Gastrocnemius medialis (tissue), 4 donors: ENCODE measurements at regions of chr4 and their contacts with region 1.

Region 1: DNA sequence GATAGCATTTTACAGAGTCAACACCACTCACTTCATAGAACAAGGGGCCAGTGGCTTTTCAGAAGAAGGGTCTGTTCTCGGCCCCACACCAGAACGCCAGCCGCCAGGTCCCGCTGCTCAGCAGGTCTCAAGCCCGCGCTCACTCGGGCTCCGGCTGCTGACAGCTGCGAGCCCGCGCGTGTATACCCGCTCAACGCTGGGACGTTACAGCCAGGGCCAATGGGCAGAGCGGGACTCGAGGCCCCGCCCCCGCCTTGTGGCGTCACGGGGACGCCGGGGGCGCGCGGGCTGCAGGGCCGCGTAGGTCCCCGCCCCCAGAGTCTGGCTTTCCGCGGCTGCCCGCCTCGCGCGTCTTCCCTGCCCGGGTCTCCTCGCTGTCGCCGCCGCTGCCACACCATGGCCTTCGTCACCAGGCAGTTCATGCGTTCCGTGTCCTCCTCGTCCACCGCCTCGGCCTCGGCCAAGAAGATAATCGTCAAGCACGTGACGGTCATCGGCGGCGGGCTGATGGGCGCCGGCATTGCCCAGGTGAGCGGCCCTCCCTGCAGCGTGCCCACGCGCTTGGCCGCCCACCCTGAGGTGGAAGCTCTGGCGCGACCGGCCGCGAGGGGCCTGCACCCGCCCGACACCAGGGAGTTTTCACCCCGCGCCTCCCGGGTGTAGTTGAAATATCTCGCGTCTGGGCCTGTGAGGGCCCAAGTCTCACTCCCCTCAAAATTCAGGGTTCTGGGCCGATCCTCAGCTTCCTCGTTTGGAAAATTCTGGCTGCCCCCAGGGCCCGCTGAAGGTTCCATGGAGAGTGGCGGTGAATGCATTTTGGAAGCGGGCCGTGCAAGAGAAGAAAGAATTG is at the start of gene HADH:
- DNase-seq: peak; percentile 92 to 96
- ATAC-seq: peak; percentile 86 to 87
- H3K4me3 ChIP-seq: peak within 1 kb of the TSS; percentile 76 to 91 (median 90)
- H3K27ac ChIP-seq: peak within 1 kb of the TSS; percentile 92 to 99 (median 96)
- H3K4me1 ChIP-seq: peaks cover 38 to 47% of the 10 kb centered on the region in 2 donors
- H3K27me3 ChIP-seq: no peaks in the 10 kb centered on the region
- CTCF ChIP-seq: no peak
- POLR2A ChIP-seq: peak; percentile 99
- total RNA-seq, gene HADH: 78.0 to 137 (median 105) TPM

Region 2: DNA sequence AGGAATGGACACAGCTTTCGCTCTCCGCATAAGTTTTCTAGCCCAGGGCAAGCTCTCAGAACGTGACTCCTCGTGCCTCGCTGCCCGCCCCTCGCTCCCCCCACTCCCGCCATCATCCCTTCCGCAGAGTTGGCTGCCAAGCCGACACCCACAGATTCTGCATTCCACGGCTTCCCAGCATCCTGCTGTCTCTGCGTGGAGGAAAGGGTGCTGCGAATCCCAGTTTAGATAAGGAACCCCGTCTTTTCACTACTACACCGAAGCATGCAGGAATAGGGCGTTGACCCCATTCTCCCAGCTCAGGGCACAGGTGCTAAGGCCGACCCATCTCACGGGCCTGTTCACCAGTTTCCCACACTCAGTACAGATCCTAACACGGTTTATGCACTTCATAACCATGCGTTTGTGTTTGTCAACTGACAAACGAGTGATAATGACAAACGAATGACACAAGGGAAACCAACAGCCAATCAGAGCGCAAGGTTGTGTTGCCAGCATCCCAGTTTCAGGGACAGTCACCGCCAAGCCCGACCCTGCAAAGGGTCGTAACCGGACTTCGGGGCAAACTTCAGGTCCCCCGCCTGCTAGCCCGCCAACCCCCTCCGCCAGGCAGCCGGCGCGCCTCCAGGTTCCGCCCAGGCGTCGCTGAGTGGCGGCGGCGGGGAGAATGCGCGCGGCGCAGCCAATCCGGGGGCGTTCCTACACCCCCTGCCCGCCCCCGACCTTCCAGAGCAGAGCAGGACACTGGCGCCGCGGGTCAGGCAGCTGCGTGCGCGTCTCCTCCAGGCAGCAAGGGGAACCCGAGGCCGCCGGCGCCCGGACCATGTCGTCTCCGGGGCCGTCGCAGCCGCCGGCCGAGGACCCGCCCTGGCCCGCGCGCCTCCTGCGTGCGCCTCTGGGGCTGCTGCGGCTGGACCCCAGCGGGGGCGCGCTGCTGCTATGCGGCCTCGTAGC is 58.7 kb before region 1 on chr4 and contains the start of gene CYP2U1:
- in situ Hi-C with region 1: loop called in 2 of 4 experiments (anchors 10 kb)
- intact Hi-C with region 1: loop called (anchors 1 kb)
- DNase-seq: peak; percentile 82 to 88
- ATAC-seq: peak; percentile 90 to 92
- H3K4me3 ChIP-seq: peak within 1 kb of the TSS; percentile 62 to 88 (median 78)
- H3K27ac ChIP-seq: peak within 1 kb of the TSS; percentile 78 to 90 (median 84)
- H3K4me1 ChIP-seq: peaks cover 26 to 27% of the 10 kb centered on the region in 2 donors
- H3K27me3 ChIP-seq: no peaks in the 10 kb centered on the region
- CTCF ChIP-seq: peak; percentile 31 to 56 (median 43)
- POLR2A ChIP-seq: peak; percentile 67 to 72
- total RNA-seq, gene CYP2U1: 3.5 to 7.5 (median 4.0) TPM

Region 3: DNA sequence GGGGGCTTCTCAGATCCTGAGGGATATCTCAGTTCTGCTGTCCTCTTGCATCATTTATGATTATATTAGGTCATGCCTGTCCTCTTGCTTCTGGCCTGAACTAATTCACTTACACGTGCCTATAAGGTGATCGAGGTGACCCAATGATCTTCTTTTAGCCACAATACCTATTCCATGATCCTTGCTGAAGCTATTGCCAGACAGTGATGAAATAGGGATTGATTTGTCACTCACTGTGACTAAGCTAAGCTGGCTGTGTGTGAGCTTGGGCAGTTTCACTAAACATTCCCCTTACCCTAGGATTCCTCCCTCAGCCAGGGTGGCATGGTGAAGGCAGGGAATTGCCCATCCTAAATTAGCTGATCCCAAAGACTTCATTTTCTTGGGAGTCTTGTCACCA is 19.0 kb after region 1 on chr4:
- in situ Hi-C with region 1: no loop called
- intact Hi-C with region 1: loop called (anchors 2 kb)
- DNase-seq: peak; percentile 32 to 62
- ATAC-seq: peak; percentile 91 to 94
- H3K4me3 ChIP-seq: no peak overlapping the region
- H3K27ac ChIP-seq: peak overlapping the region; percentile 80 to 96 (median 88)
- H3K4me1 ChIP-seq: peaks cover 60 to 71% of the 10 kb centered on the region in 2 donors
- H3K27me3 ChIP-seq: no peaks in the 10 kb centered on the region
- CTCF ChIP-seq: no peak
- POLR2A ChIP-seq: peak in 1 of 2 donors; percentile 21

Region 4: DNA sequence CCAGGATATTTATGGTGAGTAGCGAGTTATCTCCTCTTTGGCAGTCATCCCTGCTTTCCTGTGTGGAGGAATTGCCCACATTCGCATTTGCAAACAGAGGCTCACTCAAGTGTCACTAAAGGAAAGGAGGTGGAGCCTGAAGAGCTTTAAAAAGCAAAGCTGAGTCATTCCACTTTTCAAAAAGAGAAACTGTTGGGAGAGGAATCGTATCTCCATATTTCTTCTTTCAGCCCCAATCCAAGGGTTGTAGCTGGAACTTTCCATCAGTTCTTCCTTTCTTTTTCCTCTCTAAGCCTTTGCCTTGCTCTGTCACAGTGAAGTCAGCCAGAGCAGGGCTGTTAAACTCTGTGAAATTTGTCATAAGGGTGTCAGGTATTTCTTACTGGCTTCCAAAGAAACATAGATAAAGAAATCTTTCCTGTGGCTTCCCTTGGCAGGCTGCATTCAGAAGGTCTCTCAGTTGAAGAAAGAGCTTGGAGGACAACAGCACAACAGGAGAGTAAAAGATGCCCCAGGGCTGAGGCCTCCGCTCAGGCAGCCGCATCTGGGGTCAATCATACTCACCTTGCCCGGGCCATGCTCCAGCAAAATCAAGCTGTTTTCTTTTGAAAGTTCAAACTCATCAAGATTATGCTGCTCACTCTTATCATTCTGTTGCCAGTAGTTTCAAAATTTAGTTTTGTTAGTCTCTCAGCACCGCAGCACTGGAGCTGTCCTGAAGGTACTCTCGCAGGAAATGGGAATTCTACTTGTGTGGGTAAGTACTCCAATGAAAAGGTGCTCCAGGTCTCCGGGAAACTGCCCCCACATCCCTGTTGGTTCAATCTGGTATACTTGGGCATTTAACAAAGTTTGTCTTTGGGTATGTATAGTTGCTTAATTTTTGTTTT is 1923.2 kb after region 1 on chr4 and contains the start of gene EGF:
- in situ Hi-C with region 1: no loop called
- intact Hi-C with region 1: loop called (anchors 5 kb)
- DNase-seq: peak in 1 of 2 donors; percentile 41
- ATAC-seq: peak; percentile 67 to 72
- H3K4me3 ChIP-seq: peak within 1 kb of the TSS; percentile 59 to 75 (median 62)
- H3K27ac ChIP-seq: peak within 1 kb of the TSS; percentile 91 to 96 (median 93)
- H3K4me1 ChIP-seq: peaks cover 24 to 28% of the 10 kb centered on the region in 2 donors
- H3K27me3 ChIP-seq: no peaks in the 10 kb centered on the region
- CTCF ChIP-seq: no peak
- POLR2A ChIP-seq: peak; percentile 73 to 93
- total RNA-seq, gene EGF: 12.1 to 58.5 (median 21.3) TPM